ENCODE measurements at regions of chr6 and their contacts with region 1.

Region 1: DNA sequence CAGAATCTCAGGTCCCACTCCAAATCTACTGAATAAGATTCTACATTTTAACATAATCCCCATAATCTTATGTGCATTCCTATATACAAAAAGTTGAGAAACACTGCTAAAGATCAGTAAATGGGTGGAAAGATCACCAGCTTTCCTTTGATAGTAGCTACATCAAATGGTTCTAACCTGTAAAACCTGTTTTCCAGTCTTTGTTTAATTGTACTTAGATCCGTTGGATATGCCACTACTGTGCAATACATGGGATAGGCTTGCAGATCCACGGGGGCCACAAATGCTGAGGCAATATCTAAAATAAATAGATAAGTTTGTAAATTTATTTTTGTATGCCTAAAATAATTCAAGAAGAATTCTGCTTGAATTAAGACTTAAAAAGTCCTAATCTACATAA is 94.2 kb downstream of the IRAK1BP1 start:
- DNase-seq: no peak
- ATAC-seq: no peak
- H3K4me3 ChIP-seq: no peak overlapping the region
- H3K27ac ChIP-seq: no peak overlapping the region
- H3K4me1 ChIP-seq: no peaks in the 10 kb centered on the region
- CTCF ChIP-seq: no peak
- EP300 ChIP-seq: no peak
- POLR2A ChIP-seq: no peak
- RAD21 ChIP-seq: no peak

Region 2: DNA sequence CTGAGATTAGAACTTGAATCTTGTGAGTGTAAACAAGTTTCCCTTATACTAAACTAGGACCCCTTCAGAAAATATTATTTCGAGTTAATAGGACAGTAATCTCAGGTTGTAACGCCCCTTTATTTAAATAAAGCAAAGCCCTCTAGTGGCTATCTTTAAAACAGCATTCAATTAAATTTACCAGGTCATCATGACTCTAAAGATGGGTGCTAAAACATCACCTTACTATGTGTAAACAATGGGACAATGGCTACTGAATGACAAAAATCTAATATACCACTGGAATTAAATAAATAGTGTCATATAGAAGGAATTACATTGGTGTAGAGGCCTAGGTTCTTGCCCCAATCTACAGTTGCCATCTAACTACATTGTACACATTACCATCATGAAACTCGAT is 349.6 kb before region 1 on chr6:
- CTCF ChIA-PET with region 1: no interaction called
- POLR2A ChIA-PET with region 1: no interaction called
- DNase-seq: peak; percentile 18 to 47
- ATAC-seq: peak; percentile 54 to 62; a peak in 2 of 6 replicates
- H3K4me3 ChIP-seq: no peak overlapping the region
- H3K27ac ChIP-seq: no peak overlapping the region
- H3K4me1 ChIP-seq: peaks cover 5% of the 10 kb centered on the region; the same call in 1 of the 3 replicates
- CTCF ChIP-seq: peak; percentile 33
- EP300 ChIP-seq: no peak
- POLR2A ChIP-seq: no peak
- RAD21 ChIP-seq: 0 out of 5 replicates have a peak, but pooled peaks of 1 of the 2 experiments have one; percentile 1

Region 3: GRCh38 chr6:78713564-78713963 is 247.9 kb before region 1 on chr6:
- CTCF ChIA-PET with region 1: no interaction called
- POLR2A ChIA-PET with region 1: interaction called, 12 read pairs
- DNase-seq: no peak
- ATAC-seq: no peak
- H3K4me3 ChIP-seq: no peak overlapping the region
- H3K27ac ChIP-seq: no peak overlapping the region
- H3K4me1 ChIP-seq: no peaks in the 10 kb centered on the region
- CTCF ChIP-seq: no peak
- EP300 ChIP-seq: no peak
- POLR2A ChIP-seq: no peak
- RAD21 ChIP-seq: no peak